Activated CD8-positive, alpha-beta T cell treated with anti-CD3 and anti-CD28 coated beads for 36 hours (primary cell): ENCODE measurements at regions of chrX and their contacts with region 1.

Region 1: DNA sequence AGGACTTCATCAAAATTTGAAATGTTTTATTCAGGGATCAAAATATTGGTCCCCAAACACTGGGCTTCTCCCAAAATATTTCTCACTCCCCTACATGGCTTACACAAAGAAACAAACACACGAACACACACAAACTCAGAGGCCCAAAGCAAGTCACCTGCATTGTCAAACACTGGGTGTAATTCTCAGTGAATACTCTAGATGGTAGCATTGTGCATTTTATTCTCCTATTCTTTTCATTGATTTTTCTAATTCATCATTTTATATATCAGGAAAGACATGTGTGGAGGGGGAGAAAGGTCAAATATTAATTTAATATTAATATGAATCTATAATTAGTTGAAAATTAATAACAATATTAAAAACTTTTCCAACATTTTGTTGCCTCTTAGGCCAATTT is 72.3 kb upstream of the TNMD start:
- DNase-seq: no peak
- ATAC-seq: no peak
- H3K4me3 Mint-ChIP-seq: no peak overlapping the region
- H3K27ac Mint-ChIP-seq: no peak overlapping the region
- H3K4me1 Mint-ChIP-seq: no peaks in the 10 kb centered on the region
- H3K27me3 Mint-ChIP-seq: peaks cover 3% of the 10 kb centered on the region
- CTCF ChIP-seq: peak; percentile 67

Region 2: GRCh38 chrX:100194082-100194775 is 318.2 kb before region 1 on chrX:
- CTCF ChIA-PET with region 1: no interaction called
- POLR2A ChIA-PET with region 1: no interaction called
- intact Hi-C with region 1: no loop called
- DNase-seq: no peak
- ATAC-seq: no peak
- H3K4me3 Mint-ChIP-seq: no peak overlapping the region
- H3K27ac Mint-ChIP-seq: no peak overlapping the region
- H3K4me1 Mint-ChIP-seq: no peaks in the 10 kb centered on the region
- H3K27me3 Mint-ChIP-seq: no peaks in the 10 kb centered on the region
- CTCF ChIP-seq: no peak

Region 3: DNA sequence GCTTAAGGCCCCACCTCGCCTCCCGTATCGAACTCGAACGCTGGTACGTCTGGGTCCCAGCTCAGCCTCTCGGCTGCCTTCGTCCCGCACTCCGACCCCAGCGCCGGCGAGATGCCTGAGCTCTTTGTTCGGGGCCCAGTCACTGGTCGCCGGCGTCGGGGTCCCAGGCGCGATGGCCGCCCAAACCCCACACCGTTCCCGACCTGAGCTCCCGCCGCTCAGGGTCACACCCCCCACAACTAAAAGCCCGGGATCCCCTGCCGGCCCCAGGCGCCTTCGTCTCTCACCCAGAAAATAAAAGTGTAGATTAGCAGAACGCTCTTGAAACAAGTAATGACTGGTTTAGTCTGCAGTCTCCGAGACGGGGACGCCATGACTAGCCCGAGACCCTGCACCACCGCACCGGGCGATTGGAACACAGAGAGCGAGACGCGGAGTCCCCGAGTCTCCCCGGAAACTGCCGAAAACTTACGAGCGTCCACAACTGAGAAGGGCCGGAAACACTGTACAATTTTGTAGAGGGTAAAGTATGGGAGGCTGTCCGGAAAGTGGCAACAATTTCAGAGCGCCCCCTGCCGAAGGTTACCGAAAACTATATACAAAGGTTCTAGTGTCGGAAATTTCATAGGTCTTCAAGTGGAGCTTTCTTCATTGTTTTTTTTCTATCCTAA is 124.0 kb after region 1 on chrX and contains the start of gene TSPAN6:
- CTCF ChIA-PET with region 1: interaction called, 13 read pairs
- POLR2A ChIA-PET with region 1: no interaction called
- intact Hi-C with region 1: no loop called
- DNase-seq: peak; percentile 85
- ATAC-seq: peak; percentile 100
- H3K4me3 Mint-ChIP-seq: peak within 1 kb of the TSS; percentile 73
- H3K27ac Mint-ChIP-seq: peak within 1 kb of the TSS; percentile 79
- H3K4me1 Mint-ChIP-seq: peaks cover 6% of the 10 kb centered on the region
- H3K27me3 Mint-ChIP-seq: peaks cover 4% of the 10 kb centered on the region
- CTCF ChIP-seq: peak; percentile 26
- total RNA-seq, gene TSPAN6: 0.36 to 0.43 TPM